Esophagus muscularis mucosa (tissue), 4 donors: ENCODE measurements at regions of chr7 and their contacts with region 1.

Region 1: DNA sequence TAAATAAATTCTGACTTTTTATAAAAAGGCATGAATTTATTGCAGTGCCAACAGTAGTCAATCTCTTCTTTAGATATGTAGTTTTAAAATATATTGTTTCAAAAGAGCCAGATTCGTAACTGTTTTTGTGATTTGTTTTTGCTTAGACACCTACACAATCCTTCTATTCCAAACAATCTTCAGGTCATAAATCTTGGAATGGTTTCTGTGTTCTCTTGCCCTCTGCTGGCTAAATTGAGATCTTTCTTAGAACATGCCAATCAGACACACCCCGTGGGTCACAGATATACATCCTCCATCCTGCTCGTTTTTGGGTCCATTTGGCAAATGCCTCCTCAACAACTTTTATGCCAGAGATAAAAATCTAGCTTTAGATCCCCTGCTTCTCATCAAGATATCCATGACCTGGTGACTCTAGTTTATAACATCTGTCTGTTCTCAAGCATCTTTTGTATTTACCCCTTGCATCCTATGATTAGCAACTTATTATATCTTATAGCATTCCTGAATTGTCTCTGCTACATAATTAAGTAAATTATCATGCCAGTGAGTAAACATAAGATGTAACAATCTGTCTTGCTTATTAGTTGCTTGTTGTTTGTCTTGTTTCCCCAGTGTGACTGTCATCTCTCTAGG is 35.3 kb upstream of the IFRD1 start:
- DNase-seq: no peak
- H3K4me3 ChIP-seq: no peak overlapping the region
- H3K27ac ChIP-seq: no peak overlapping the region
- H3K4me1 ChIP-seq: peaks cover 0 to 3% (median under 1%) of the 10 kb centered on the region in 4 donors
- H3K27me3 ChIP-seq: peaks cover 0 to 6% (median 0%) of the 10 kb centered on the region in 4 donors
- CTCF ChIP-seq: peak; percentile 28 to 49 (median 36)
- EP300 ChIP-seq: no peak
- POLR2A ChIP-seq: no peak

Region 2: DNA sequence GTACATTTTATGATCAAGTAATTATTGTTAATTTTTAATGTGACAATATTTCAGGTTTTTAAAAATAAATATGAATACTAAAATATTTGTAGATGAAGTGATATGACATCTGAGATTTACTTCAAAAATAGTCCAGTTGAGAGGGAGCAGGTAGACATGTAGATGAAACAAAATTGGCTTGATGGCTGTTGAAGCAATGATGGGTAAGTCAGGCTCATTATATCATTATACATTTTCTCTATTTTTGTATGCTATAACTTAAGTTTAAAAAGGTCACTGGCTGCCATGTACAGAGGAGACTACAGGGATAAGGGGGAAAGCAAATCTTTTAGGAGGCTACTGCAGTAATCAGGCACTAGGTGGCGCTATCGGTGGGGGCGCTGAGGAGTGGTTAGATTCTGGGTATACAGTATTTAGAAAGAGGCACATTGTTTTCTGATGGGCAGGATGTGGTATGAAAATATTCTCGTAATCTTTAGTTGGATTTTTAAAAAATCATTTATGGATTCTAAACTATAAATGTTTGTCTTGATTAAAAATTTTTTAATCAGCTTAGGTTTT is 662.9 kb before region 1 on chr7:
- intact Hi-C with region 1: loop called (anchors 5 kb)
- DNase-seq: no peak
- H3K4me3 ChIP-seq: no peak overlapping the region
- H3K27ac ChIP-seq: no peak overlapping the region
- H3K4me1 ChIP-seq: no peaks in the 10 kb centered on the region
- H3K27me3 ChIP-seq: no peaks in the 10 kb centered on the region
- CTCF ChIP-seq: peak; percentile 45 to 72 (median 53)
- EP300 ChIP-seq: no peak
- POLR2A ChIP-seq: no peak

Region 3: GRCh38 chr7:111820121-111820520 is 594.9 kb before region 1 on chr7:
- intact Hi-C with region 1: no loop called
- DNase-seq: no peak
- H3K4me3 ChIP-seq: no peak overlapping the region
- H3K27ac ChIP-seq: no peak overlapping the region
- H3K4me1 ChIP-seq: no peaks in the 10 kb centered on the region
- H3K27me3 ChIP-seq: no peaks in the 10 kb centered on the region
- CTCF ChIP-seq: no peak
- EP300 ChIP-seq: no peak
- POLR2A ChIP-seq: no peak

Region 4: GRCh38 chr7:111953611-111954010 is 461.4 kb before region 1 on chr7:
- intact Hi-C with region 1: loop called (anchors 10 kb)
- DNase-seq: no peak
- H3K4me3 ChIP-seq: no peak overlapping the region
- H3K27ac ChIP-seq: no peak overlapping the region
- H3K4me1 ChIP-seq: peaks cover 0 to 20% (median 13%) of the 10 kb centered on the region in 4 donors
- H3K27me3 ChIP-seq: no peaks in the 10 kb centered on the region
- CTCF ChIP-seq: no peak
- EP300 ChIP-seq: no peak
- POLR2A ChIP-seq: no peak

Region 5: DNA sequence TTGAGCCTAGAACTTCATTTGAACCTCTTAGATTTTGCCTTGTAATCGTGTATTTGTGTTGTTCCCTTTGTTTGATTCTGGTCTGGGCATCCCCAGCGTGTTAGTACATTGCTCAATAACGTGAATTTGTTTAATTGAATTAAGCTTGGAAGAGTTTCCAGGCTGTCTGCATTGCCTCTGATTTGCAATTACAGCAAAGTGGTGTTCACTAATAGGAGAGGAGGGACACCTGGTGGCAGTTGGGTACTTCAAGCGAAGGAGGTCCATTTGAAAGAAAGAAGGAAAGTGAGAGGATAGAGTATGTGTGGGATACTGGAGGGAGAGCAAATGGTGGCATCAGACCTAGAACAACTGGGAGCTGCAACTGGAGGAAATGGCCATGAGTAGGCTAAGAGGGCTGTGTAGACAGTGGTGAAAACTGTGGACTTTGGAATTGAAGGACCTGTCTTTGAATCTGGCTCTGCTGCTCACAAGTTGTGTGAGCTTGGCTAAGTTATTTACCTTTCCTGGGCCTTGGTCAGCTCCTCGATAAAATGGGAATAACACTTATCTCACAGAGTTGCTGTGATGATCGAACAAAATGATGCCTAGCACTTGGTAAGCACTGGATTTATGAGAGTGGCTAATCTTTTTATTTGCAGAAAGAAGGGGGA is 81.0 kb after region 1 on chr7:
- intact Hi-C with region 1: loop called (anchors 5 kb)
- DNase-seq: peak; percentile 92
- H3K4me3 ChIP-seq: no peak overlapping the region
- H3K27ac ChIP-seq: no peak overlapping the region
- H3K4me1 ChIP-seq: peaks cover 0 to 5% (median 0%) of the 10 kb centered on the region in 4 donors
- H3K27me3 ChIP-seq: no peaks in the 10 kb centered on the region
- CTCF ChIP-seq: peak; percentile 66 to 69 (median 67)
- EP300 ChIP-seq: no peak
- POLR2A ChIP-seq: no peak